ENCODE measurements at regions of chr5 and their contacts with region 1.

Region 1: GRCh38 chr5:121415274-121415673 is 436.4 kb upstream of the FTMT start:
- DNase-seq: no peak
- H3K4me3 ChIP-seq: no peak overlapping the region
- H3K27ac ChIP-seq: no peak overlapping the region
- H3K27me3 ChIP-seq: no peaks in the 10 kb centered on the region
- CTCF ChIP-seq: no peak

Region 2: DNA sequence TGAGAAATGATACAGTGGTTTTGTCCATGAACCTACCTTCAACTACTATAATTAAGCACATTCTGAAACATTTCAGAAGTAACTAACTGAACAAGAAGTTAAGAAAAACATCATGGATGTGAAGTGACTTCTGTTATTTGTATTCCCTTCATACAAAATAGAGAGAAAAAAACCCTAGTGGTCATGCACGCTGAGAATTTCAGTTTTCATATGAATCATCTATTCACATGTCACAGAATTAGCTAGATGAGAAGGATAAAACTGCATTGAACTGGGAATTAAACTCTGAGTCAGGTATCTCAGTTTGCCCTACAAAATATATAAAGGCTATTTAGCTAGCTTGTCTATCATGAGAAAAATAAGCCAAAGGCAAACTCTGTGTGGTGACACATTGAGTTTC is 15.4 kb before region 1 on chr5:
- intact Hi-C with region 1: loop called in 1 of 2 experiments (anchors 1 kb)
- DNase-seq: no peak
- H3K4me3 ChIP-seq: no peak overlapping the region
- H3K27ac ChIP-seq: no peak overlapping the region
- H3K27me3 ChIP-seq: no peaks in the 10 kb centered on the region
- CTCF ChIP-seq: peak in 1 of 56 donors; percentile 7

Measured in dorsolateral prefrontal cortex (tissue), 120 donors.